GM12878 (cell line): ENCODE measurements at regions of chr6 and their contacts with region 1.

Region 1: GRCh38 chr6:70857387-70858077 is 99.3 kb downstream of the B3GAT2 start:
- DNase-seq: peak; percentile 66
- ATAC-seq: peak; percentile 100
- H3K4me3 ChIP-seq: no peak overlapping the region
- H3K27ac ChIP-seq: no peak overlapping the region
- H3K4me1 ChIP-seq: peaks cover 7% of the 10 kb centered on the region
- H3K27me3 ChIP-seq: no peaks in the 10 kb centered on the region
- CTCF ChIP-seq: no peak
- EP300 ChIP-seq: peak; percentile 70 to 87; a peak in 3 of 4 replicates
- POLR2A ChIP-seq: no peak
- RAD21 ChIP-seq: no peak

Region 2: GRCh38 chr6:70843328-70843918 is 14.1 kb before region 1 on chr6:
- CTCF ChIA-PET with region 1: interaction called, 4 read pairs
- POLR2A ChIA-PET with region 1: interaction called, 3 read pairs
- RAD21 ChIA-PET with region 1: interaction called, 10 read pairs
- SMC1A ChIA-PET with region 1: interaction called, 3 read pairs
- in situ Hi-C with region 1: no loop called
- intact Hi-C with region 1: no loop called
- DNase-seq: no peak
- ATAC-seq: no peak
- H3K4me3 ChIP-seq: no peak overlapping the region
- H3K27ac ChIP-seq: no peak overlapping the region
- H3K4me1 ChIP-seq: no peaks in the 10 kb centered on the region
- H3K27me3 ChIP-seq: no peaks in the 10 kb centered on the region
- CTCF ChIP-seq: 0 out of 6 replicates have a peak, but pooled peaks of 1 of the 3 experiments have one; percentile 3
- EP300 ChIP-seq: no peak
- POLR2A ChIP-seq: no peak
- RAD21 ChIP-seq: no peak

Region 3: DNA sequence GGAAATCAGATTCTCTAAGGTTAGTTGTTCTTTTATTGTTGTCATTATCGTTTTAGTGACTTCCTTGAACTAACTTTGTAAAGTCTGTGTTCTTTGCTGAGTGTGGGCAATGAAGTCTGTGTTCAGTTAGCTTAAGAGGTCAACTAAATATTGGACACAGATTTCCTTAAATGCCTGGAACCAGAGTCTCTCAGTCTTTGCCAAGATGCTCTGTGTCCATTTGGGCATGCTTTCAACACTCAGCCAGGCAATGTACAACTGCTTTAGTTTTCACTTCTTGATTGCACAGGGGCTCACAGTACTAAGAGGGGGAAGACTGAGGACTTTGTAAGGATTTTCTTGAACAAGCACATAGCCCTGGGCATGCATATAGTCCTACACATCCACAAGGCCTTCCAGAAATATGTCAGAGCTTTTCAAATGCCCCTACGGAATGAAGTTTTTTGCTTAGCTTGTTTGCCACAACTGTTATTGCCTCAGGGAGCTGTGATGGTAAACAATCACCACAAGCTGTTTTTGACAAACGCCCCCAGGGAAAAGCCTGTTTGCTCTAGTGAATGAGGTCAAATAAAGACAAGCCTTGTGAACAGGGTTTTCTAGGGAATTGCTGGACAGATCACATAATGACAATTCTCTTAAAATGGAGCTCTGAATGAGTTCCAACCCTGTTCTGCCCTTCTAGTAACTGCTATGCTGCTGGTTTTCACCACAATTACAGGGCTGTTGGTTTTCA is 16.8 kb after region 1 on chr6:
- CTCF ChIA-PET with region 1: no interaction called
- POLR2A ChIA-PET with region 1: no interaction called
- RAD21 ChIA-PET with region 1: interaction called, 3 read pairs
- SMC1A ChIA-PET with region 1: interaction called, 11 read pairs
- in situ Hi-C with region 1: no loop called
- intact Hi-C with region 1: no loop called
- DNase-seq: no peak
- ATAC-seq: no peak
- H3K4me3 ChIP-seq: no peak overlapping the region
- H3K27ac ChIP-seq: no peak overlapping the region
- H3K4me1 ChIP-seq: no peaks in the 10 kb centered on the region
- H3K27me3 ChIP-seq: no peaks in the 10 kb centered on the region
- CTCF ChIP-seq: no peak
- EP300 ChIP-seq: no peak
- POLR2A ChIP-seq: no peak
- RAD21 ChIP-seq: no peak